ENCODE measurements at regions of chr6 and their contacts with region 1.

Region 1: GRCh38 chr6:136289579-136290409 is at the start of gene BCLAF1:
- DNase-seq: peak; percentile 100
- ATAC-seq: peak; percentile 81
- H3K4me3 Mint-ChIP-seq: peak within 1 kb of the TSS; percentile 95
- H3K27ac Mint-ChIP-seq: peak within 1 kb of the TSS; percentile 98
- H3K4me1 Mint-ChIP-seq: peaks cover 38% of the 10 kb centered on the region
- H3K27me3 Mint-ChIP-seq: no peaks in the 10 kb centered on the region
- total RNA-seq, gene BCLAF1: 127 to 179 TPM

Region 2: DNA sequence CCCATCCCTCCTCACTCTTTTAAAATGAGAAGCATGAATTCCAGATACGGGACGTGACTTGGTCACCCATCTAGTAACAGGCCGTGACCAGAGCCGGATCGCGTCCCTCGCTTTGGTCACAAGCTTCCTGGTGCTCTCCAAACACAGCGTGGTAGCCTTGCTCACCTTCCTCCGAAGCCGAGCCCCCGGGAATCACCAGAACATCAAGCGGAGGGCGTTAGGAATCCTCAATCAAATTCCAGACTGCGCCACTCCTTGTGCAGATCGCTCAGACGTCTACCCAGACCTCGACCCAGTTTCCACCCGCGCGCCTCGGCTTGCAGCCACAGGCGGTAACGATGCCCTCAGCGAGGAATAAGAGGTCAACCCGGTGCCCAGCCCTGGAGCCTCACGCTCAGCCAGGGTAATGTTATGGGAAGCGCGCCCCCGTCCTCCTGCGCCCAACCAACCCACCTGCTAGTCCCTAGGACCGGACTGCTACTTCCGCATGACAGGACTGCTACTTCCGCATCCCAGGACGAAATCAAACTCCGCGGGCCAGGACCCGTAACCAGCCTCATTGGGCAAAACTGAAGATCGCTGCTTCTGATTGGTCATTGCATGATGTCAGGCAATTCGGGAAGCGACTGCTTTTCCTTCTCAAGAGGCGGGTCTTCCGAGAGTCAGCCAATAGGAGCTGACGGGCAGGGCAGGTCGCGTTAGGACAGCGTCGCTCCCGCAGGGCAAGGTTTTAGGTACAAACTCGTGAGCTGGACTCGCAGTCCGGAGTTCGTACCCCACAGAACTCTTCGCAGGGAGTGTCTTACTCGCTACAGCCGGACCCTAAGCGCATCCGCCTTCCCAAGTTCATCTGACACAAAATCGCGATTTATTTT is 39.7 kb before region 1 on chr6 and contains the start of gene MTFR2:
- CTCF ChIA-PET with region 1: interaction called, 10 read pairs
- DNase-seq: peak; percentile 98
- ATAC-seq: peak; percentile 94
- H3K4me3 Mint-ChIP-seq: peak within 1 kb of the TSS; percentile 97
- H3K27ac Mint-ChIP-seq: peak within 1 kb of the TSS; percentile 89
- H3K4me1 Mint-ChIP-seq: peaks cover 78% of the 10 kb centered on the region
- H3K27me3 Mint-ChIP-seq: no peaks in the 10 kb centered on the region
- total RNA-seq, gene MTFR2: 31.8 to 35.8 TPM

Region 3: GRCh38 chr6:136317021-136317694 is 27.4 kb after region 1 on chr6:
- CTCF ChIA-PET with region 1: interaction called, 13 read pairs
- DNase-seq: peak; percentile 76
- ATAC-seq: peak; percentile 85
- H3K4me3 Mint-ChIP-seq: no peak overlapping the region
- H3K27ac Mint-ChIP-seq: no peak overlapping the region
- H3K4me1 Mint-ChIP-seq: peaks cover 3% of the 10 kb centered on the region
- H3K27me3 Mint-ChIP-seq: peaks cover 6% of the 10 kb centered on the region

Region 4: DNA sequence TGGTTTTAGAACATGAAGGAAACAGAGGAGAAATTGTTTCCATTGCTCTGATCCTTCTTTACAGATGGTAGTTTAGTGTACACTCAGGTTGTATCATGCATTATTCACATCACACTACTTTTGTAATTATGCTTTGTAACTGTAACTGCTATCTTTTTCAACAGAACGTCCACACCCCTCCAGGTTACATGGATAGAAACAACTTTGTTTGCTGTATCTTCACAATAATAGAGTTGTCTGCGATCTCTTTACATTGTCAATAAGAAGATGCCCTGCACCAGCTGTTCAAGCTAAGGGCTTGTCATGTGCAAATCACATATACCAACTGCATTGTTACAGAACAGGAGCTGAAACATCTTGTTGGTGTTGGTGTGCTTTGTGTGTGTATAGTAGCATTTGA is 328.3 kb after region 1 on chr6:
- CTCF ChIA-PET with region 1: no interaction called
- DNase-seq: no peak
- ATAC-seq: no peak
- H3K4me3 Mint-ChIP-seq: no peak overlapping the region
- H3K27ac Mint-ChIP-seq: no peak overlapping the region
- H3K4me1 Mint-ChIP-seq: no peaks in the 10 kb centered on the region
- H3K27me3 Mint-ChIP-seq: no peaks in the 10 kb centered on the region

Measured in activated CD8-positive, alpha-beta memory T cell treated with anti-CD3 and anti-CD28 coated beads, Interleukin-2, amount 10 ng/mL, durations not matched to agents 7 days and 5 days (primary cell).